A673 (cell line): ENCODE measurements at regions of chr7 and their contacts with region 1.

Region 1: DNA sequence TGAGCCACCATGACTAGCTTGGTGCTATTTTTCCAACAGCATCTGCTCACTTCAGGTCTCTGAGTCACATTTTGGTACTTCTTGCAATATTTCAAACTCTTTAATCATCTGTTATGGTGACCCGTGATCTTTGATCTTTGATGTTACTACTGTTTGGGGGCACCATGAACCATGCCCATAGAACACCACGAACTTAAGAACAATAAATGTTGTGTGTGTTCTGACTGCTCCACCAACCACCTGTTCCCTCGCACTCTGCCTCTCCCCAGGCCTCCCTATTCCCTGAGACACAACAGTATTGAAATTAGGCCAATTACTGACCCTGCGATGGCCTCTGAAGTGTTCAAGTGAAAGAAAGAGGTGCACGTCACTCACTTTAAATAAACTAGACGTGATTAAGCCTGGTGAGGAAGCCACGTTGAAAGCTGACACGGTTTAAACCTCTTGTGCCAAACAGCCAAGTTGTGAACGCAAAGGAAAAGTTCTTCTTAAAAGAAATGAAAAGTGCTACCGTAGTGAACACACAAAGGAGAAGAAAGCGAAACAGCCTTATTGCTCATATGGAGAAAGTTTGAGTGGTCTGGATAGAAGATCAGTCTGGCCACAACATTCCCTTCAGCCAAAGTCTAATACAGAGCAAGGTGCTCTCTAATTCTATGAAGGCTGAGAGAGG is 27.2 kb upstream of the ATP6V0A4 start:
- DNase-seq: no peak
- H3K4me3 ChIP-seq: no peak overlapping the region
- H3K27ac ChIP-seq: no peak overlapping the region
- H3K4me1 ChIP-seq: no peaks in the 10 kb centered on the region
- H3K27me3 ChIP-seq: no peaks in the 10 kb centered on the region
- CTCF ChIP-seq: no peak

Region 2: GRCh38 chr7:138584696-138585095 is 240.5 kb before region 1 on chr7:
- CTCF ChIA-PET with region 1: no interaction called
- POLR2A ChIA-PET with region 1: interaction called, 17 read pairs
- intact Hi-C with region 1: no loop called
- DNase-seq: no peak
- H3K4me3 ChIP-seq: no peak overlapping the region
- H3K27ac ChIP-seq: no peak overlapping the region
- H3K4me1 ChIP-seq: no peaks in the 10 kb centered on the region
- H3K27me3 ChIP-seq: no peaks in the 10 kb centered on the region
- CTCF ChIP-seq: no peak

Region 3: GRCh38 chr7:138785587-138786437 is 39.4 kb before region 1 on chr7:
- CTCF ChIA-PET with region 1: no interaction called
- POLR2A ChIA-PET with region 1: no interaction called
- intact Hi-C with region 1: no loop called
- DNase-seq: no peak
- H3K4me3 ChIP-seq: no peak overlapping the region
- H3K27ac ChIP-seq: no peak overlapping the region
- H3K4me1 ChIP-seq: no peaks in the 10 kb centered on the region
- H3K27me3 ChIP-seq: peaks cover 2% of the 10 kb centered on the region
- CTCF ChIP-seq: no peak